Activated T-helper 2 cell treated with anti-CD3 and anti-CD28 coated beads, Interferon-gamma antibody, Interleukin-2, Interleukin-4, amounts not matched to agents 10 μg/mL and 5 μg/mL and 100 μg/mL, durations not matched to agents 14 hours and 24 hours and 36 hours (primary cell): ENCODE measurements at regions of chr19 and their contacts with region 1.

Region 1: GRCh38 chr19:55258828-55259539 is at the start of gene PPP6R1:
- DNase-seq: peak; percentile 94
- H3K4me3 Mint-ChIP-seq: peak within 1 kb of the TSS; percentile 92
- H3K27ac Mint-ChIP-seq: peak within 1 kb of the TSS; percentile 97
- H3K4me1 Mint-ChIP-seq: peaks cover 43% of the 10 kb centered on the region
- H3K27me3 Mint-ChIP-seq: no peaks in the 10 kb centered on the region
- total RNA-seq, gene PPP6R1: 180 and 183 TPM in 2 replicates

Region 2: DNA sequence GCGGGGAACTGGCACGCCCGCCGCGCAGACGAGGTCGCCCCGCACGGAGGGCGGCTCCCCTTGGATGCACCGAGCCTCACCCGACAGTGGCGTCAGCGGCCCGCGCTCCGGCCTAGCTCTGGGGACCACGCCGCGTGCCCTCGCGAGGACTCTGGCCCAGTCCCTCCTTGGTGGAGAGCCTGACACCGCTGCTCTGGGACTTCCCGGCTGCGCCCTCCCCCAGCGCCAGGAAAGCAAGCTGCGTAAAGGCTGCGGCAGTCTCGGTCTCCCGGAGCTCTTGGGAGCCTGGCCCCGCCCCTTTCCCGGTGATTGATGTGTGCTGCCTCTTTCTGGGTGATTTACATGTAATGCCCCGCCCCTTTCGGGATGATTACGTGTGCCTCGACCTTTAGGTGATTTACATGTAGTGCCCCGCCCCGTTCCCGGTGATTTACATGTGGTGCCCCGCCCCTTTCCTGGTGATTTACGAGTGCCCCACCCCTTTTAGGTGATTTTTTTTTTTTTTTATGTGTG is 795.4 kb before region 1 on chr19 and contains the start of gene LENG9:
- intact Hi-C with region 1: loop called (anchors 2 kb)
- DNase-seq: peak; percentile 95
- H3K4me3 Mint-ChIP-seq: peak within 1 kb of the TSS; percentile 83
- H3K27ac Mint-ChIP-seq: peak within 1 kb of the TSS; percentile 92
- H3K4me1 Mint-ChIP-seq: peaks cover 12% of the 10 kb centered on the region
- H3K27me3 Mint-ChIP-seq: peaks cover 11% of the 10 kb centered on the region
- total RNA-seq, gene LENG9: 7.5 and 8.1 TPM in 2 replicates

Region 3: DNA sequence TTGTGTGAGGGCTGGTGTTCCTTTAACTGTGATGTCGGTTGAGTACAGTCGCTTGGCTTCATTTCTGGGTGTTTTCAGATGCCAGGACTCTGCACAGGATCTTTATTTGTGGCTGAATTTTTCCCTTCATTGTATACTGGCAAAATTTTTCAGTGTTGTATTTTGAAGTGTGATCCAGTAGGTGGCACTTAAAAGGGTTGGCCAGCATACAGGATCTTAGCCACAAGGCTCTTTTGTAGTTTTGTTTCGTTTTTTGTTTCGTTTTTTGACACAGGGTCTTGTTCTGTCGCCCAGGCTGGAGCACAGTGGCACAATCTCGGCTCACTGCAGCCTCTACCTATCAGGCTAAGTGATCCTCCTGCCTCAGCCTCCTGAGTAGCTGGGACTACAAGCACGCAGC is 376.2 kb before region 1 on chr19:
- intact Hi-C with region 1: no loop called
- DNase-seq: no peak
- H3K4me3 Mint-ChIP-seq: peak overlapping the region; percentile 33
- H3K27ac Mint-ChIP-seq: no peak overlapping the region
- H3K4me1 Mint-ChIP-seq: peaks cover 2% of the 10 kb centered on the region
- H3K27me3 Mint-ChIP-seq: peaks cover 8% of the 10 kb centered on the region

Region 4: DNA sequence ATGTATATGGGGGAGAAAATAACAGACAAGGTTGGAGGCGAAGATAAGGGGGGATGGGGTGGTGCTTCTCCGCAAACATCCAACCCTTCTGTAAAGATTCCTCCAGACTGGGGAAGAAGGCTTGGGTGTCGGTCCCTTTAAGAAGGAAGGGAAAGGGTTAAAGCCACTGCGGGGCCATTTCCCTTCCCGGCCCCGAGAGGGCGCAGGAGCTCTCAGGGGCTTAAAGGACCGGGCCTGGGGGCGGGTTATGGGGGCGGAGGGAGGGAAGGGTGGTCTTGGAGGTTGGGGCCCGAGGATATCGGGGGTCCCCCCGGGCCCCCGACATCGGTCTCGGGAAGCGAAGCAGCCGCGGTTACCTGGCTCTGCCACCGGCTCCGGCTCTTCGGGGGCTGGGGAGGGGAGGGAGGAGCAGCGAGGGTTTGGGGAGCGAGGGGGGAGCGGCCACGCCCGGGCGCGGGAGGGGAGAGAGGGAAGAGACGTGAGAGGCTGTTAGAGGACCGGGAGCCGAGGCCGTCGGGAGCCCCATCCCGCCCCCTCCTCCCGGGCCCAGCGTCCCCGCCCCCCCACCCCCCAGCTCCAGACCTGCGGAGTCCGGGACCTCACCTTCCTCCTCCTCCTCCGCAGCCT is 112.8 kb before region 1 on chr19:
- intact Hi-C with region 1: no loop called
- DNase-seq: no peak
- H3K4me3 Mint-ChIP-seq: no peak overlapping the region
- H3K27ac Mint-ChIP-seq: no peak overlapping the region
- H3K4me1 Mint-ChIP-seq: peaks cover 1% of the 10 kb centered on the region
- H3K27me3 Mint-ChIP-seq: peaks cover 36% of the 10 kb centered on the region

Region 5: DNA sequence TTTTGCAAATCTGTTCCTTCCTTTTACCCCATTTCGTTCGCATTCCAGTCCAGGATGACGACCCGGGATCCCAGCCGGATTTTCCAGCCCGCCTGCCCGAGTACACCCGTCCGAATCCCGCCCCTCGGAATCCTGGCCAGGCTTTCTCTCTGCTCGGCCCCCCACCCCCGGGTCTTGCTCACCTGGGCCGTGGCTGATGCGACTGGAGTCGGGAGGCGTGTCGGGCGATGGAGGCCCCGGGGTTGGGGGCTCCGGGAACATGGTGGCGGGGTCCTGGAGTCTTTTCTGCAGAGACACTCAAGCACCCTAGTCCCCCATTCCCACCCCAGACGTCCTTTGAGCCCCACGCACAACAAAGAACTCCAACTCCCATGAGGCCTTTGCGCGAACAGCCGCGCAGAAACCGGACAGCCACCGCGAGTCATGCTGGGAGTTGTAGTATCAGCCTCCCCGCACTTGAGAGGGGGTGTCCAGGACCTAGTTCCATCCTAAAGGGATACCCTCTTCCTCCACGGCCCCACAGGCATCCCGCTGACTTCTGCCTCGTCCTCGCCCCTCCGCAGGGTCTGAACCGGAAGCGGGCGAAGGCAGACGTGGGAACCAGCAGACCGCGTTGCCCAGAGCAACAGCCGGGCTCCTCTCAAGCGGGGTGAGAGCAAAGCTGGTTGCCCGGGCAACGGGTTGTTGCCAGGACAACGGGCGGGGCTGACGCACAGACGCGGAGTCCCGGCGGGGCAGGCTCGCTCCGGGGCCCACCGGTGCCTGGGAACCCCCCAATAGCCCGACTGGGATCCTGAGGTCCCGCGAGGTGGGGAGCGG is 80.0 kb before region 1 on chr19:
- intact Hi-C with region 1: loop called (anchors 5 kb)
- DNase-seq: peak; percentile 90
- H3K4me3 Mint-ChIP-seq: peak overlapping the region; percentile 60
- H3K27ac Mint-ChIP-seq: no peak overlapping the region
- H3K4me1 Mint-ChIP-seq: peaks cover 14% of the 10 kb centered on the region
- H3K27me3 Mint-ChIP-seq: peaks cover 45% of the 10 kb centered on the region

Region 6: GRCh38 chr19:55279770-55280643 is 21.0 kb after region 1 on chr19 and contains the start of gene HSPBP1:
- intact Hi-C with region 1: loop called (anchors 1 kb)
- DNase-seq: peak; percentile 96
- H3K4me3 Mint-ChIP-seq: peak within 1 kb of the TSS; percentile 100
- H3K27ac Mint-ChIP-seq: peak within 1 kb of the TSS; percentile 97
- H3K4me1 Mint-ChIP-seq: peaks cover 16% of the 10 kb centered on the region
- H3K27me3 Mint-ChIP-seq: peaks cover 3% of the 10 kb centered on the region
- total RNA-seq, gene HSPBP1: 59.0 and 59.3 TPM in 2 replicates

Region 7: GRCh38 chr19:55385740-55386529 is 127.0 kb after region 1 on chr19 and contains the start of gene RPL28:
- intact Hi-C with region 1: loop called (anchors 1 kb)
- DNase-seq: peak; percentile 99
- H3K4me3 Mint-ChIP-seq: peak within 1 kb of the TSS; percentile 100
- H3K27ac Mint-ChIP-seq: peak within 1 kb of the TSS; percentile 94
- H3K4me1 Mint-ChIP-seq: peaks cover 44% of the 10 kb centered on the region
- H3K27me3 Mint-ChIP-seq: no peaks in the 10 kb centered on the region
- total RNA-seq, gene RPL28: 2,206 and 2,207 TPM in 2 replicates

Region 8: GRCh38 chr19:55643348-55644176 is 384.6 kb after region 1 on chr19 and contains the start of gene ZNF581:
- intact Hi-C with region 1: loop called (anchors 10 kb)
- DNase-seq: peak; percentile 77
- H3K4me3 Mint-ChIP-seq: peak within 1 kb of the TSS; percentile 99
- H3K27ac Mint-ChIP-seq: peak within 1 kb of the TSS; percentile 97
- H3K4me1 Mint-ChIP-seq: peaks cover 36% of the 10 kb centered on the region
- H3K27me3 Mint-ChIP-seq: no peaks in the 10 kb centered on the region
- total RNA-seq, gene ZNF581: 26.6 and 27.0 TPM in 2 replicates